ENCODE measurements at regions of chr5 and their contacts with region 1.

Region 1: GRCh38 chr5:116759860-116760640 is 185.4 kb upstream of the SEMA6A start:
- DNase-seq: no peak
- ATAC-seq: no peak
- H3K4me3 ChIP-seq: no peak overlapping the region
- H3K27ac ChIP-seq: no peak overlapping the region
- H3K4me1 ChIP-seq: peaks cover 18% of the 10 kb centered on the region; the same call in 1 of the 2 replicates
- H3K27me3 ChIP-seq: no peaks in the 10 kb centered on the region
- CTCF ChIP-seq: no peak
- EP300 ChIP-seq: no peak
- POLR2A ChIP-seq: no peak
- RAD21 ChIP-seq: no peak

Region 2: DNA sequence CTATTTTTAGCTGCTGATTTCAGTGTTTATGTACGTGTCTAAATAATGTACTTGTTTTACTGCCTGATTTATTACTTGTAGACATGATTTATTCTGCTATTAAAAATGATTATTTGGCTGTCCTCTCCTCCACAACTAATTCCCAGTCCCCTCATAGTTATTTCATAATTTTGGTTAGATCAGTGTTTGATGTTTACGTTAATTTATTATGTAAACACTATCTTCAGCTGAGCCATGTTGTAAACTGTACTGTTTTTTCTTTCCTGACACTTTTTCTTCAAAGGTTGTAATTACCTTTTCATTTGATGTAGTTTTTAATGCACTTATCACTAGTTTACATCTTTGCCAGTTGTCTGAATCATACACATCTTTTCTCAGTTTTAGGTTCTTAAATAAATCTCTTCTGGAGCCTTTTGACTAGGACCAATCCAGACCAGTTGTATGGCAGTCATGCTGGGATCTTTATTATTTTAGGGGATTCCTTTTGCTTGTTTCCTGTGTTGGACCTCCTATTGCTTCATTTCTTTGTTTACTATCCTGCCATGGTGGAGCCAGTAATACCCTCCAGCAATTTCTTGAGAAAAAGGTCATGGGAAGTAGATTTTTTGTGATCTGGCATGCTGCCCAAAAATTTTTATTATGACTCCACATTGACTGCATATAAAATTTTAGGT is 902.3 kb before region 1 on chr5:
- CTCF ChIA-PET with region 1: no interaction called
- POLR2A ChIA-PET with region 1: no interaction called
- RAD21 ChIA-PET with region 1: no interaction called
- SMC1A ChIA-PET with region 1: no interaction called
- in situ Hi-C with region 1: no loop called
- intact Hi-C with region 1: no loop called
- DNase-seq: no peak
- ATAC-seq: no peak
- H3K4me3 ChIP-seq: no peak overlapping the region
- H3K27ac ChIP-seq: no peak overlapping the region
- H3K4me1 ChIP-seq: no peaks in the 10 kb centered on the region
- H3K27me3 ChIP-seq: no peaks in the 10 kb centered on the region
- CTCF ChIP-seq: no peak
- EP300 ChIP-seq: no peak
- POLR2A ChIP-seq: no peak
- RAD21 ChIP-seq: no peak

Region 3: DNA sequence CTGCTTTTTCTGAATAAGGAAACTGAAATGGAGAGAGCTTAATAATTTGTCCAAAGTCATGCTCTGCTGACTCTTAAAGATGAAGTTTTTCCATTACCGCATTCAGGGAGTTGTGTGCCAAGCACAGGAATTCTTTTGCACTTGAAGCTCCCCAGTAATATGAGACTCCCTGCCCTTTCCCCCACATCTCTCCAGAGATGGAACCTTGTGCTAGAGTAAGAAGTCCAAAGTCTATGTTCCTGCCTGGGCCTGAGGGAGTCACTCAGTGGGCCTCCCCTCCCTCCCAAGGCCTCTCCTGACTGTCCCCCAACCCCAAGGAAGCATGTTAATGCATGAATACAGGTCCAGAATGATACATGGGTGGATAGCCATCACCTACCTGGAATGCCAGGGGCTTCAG is 12.2 kb before region 1 on chr5:
- CTCF ChIA-PET with region 1: interaction called, 3 read pairs
- POLR2A ChIA-PET with region 1: interaction called, 7 read pairs
- RAD21 ChIA-PET with region 1: interaction called, 6 read pairs
- SMC1A ChIA-PET with region 1: interaction called, 25 read pairs
- in situ Hi-C with region 1: no loop called
- intact Hi-C with region 1: no loop called
- DNase-seq: no peak
- ATAC-seq: no peak
- H3K4me3 ChIP-seq: no peak overlapping the region
- H3K27ac ChIP-seq: no peak overlapping the region
- H3K4me1 ChIP-seq: no peaks in the 10 kb centered on the region
- H3K27me3 ChIP-seq: no peaks in the 10 kb centered on the region
- CTCF ChIP-seq: no peak
- EP300 ChIP-seq: no peak
- POLR2A ChIP-seq: no peak
- RAD21 ChIP-seq: no peak

Measured in GM12878 (cell line).